ENCODE measurements at regions of chr12 and their contacts with region 1.

Region 1: GRCh38 chr12:4107436-4107878 is 166.1 kb upstream of the CCND2 start:
- DNase-seq: peak; percentile 79
- ATAC-seq: peak; percentile 92
- H3K4me3 Mint-ChIP-seq: peak overlapping the region; percentile 15
- H3K27ac Mint-ChIP-seq: peak overlapping the region; percentile 73
- H3K4me1 Mint-ChIP-seq: peaks cover 36% of the 10 kb centered on the region
- H3K27me3 Mint-ChIP-seq: peaks cover 11% of the 10 kb centered on the region

Region 2: GRCh38 chr12:3998968-3999826 is 108.3 kb before region 1 on chr12:
- CTCF ChIA-PET with region 1: interaction called, 3 read pairs
- POLR2A ChIA-PET with region 1: no interaction called
- intact Hi-C with region 1: loop called in 1 of 2 experiments (anchors 5 kb)
- DNase-seq: no peak
- ATAC-seq: no peak
- H3K4me3 Mint-ChIP-seq: no peak overlapping the region
- H3K27ac Mint-ChIP-seq: no peak overlapping the region
- H3K4me1 Mint-ChIP-seq: peaks cover 16% of the 10 kb centered on the region
- H3K27me3 Mint-ChIP-seq: no peaks in the 10 kb centered on the region

Region 3: DNA sequence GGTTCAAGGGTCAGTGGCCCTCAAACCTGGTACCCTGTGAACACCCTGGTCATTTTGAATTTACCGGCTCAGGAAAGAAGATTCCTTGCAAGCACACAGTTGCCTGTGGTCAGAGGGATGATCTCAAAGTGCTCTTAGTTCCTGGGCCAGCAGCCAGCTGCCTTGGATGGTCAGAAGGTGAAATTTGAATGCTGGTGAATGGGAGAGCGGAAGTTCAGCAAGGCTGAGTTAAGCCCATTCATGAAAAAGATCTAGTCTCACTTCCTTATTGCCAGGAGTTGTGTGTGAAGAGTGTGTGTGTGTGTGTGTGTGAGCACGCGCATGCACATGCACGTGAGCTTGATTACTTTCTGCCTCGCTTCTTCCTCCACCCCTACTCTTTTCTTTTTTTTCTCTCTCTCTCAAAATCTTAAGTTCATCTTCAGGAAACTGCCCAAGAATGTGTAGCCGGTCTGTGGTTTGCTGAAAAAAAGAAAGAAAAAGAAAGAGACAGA is 10.6 kb after region 1 on chr12:
- CTCF ChIA-PET with region 1: interaction called, 18 read pairs
- POLR2A ChIA-PET with region 1: interaction called, 5 read pairs
- intact Hi-C with region 1: no loop called
- DNase-seq: no peak
- ATAC-seq: no peak
- H3K4me3 Mint-ChIP-seq: peak overlapping the region; percentile 38
- H3K27ac Mint-ChIP-seq: peak overlapping the region; percentile 86
- H3K4me1 Mint-ChIP-seq: peaks cover 63% of the 10 kb centered on the region
- H3K27me3 Mint-ChIP-seq: peaks cover 3% of the 10 kb centered on the region

Region 4: DNA sequence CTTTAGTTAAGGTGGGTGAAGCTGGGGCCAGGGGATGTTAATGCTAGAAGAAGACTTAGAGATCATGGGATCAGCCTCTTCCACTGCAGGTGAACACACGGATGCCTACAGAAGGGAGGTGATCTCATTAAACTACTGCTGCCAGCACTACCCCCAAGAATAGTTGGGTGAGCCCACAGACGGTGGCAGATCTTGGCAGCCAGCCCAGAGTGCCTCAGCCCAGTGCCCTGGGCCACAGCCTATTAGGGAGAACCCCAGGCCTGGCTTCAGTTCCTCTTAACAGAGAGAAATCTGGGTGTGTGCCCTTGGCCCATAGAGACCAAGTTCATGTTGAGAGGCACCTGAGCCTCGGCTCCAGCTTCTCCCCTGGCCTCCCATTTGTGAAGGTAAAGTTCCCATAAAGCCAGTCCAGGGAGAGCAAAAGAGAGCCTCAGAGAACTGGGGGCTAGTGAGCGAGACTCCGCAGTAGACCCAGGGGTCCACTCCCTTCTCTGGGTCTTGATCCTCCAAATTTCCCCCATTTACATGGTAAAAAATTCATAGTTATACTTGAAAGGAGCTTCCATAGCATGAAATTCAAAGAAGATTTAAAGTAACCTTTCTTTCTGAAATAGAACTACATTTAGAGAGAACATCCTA is 41.1 kb after region 1 on chr12:
- CTCF ChIA-PET with region 1: interaction called, 17 read pairs
- POLR2A ChIA-PET with region 1: interaction called, 3 read pairs
- intact Hi-C with region 1: loop called in 1 of 2 experiments (anchors 1 kb)
- DNase-seq: peak; percentile 75
- ATAC-seq: no peak
- H3K4me3 Mint-ChIP-seq: no peak overlapping the region
- H3K27ac Mint-ChIP-seq: peak overlapping the region; percentile 94
- H3K4me1 Mint-ChIP-seq: peaks cover 87% of the 10 kb centered on the region
- H3K27me3 Mint-ChIP-seq: no peaks in the 10 kb centered on the region

Region 5: DNA sequence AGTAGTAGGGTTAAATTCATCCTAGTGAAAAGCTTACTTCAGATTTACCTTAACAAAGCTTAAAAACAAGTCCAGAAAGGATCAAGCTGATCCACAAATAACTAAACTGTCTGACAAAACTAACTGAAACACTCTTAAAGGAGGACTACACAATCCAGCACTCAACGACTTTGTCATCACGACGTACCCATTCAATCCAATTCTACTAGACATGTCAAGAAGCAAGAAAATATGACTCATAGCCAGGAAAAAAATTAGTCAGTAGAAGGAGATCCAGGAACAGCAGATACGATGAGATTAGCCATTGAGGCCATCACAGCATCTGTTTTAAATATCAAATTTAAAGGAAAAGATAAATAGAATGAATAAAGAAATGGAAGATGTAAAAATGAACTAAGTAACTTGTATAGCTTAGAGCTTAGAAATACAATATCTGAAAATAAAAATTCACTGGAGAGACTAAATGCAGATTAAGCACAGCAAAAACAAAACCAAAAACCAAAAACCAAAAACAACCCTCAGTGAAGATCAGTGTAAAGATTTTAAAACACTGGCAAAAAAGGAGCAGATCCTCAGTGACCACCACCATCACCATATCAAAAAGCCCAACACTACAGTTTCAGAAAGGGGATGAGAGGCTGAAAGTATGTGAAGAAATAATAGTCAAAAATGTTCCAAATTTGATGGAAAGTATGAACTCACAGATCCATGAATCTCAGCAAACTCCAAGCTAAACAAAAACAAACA is 71.1 kb after region 1 on chr12:
- CTCF ChIA-PET with region 1: interaction called, 6 read pairs
- POLR2A ChIA-PET with region 1: no interaction called
- intact Hi-C with region 1: loop called in 1 of 2 experiments (anchors 1 kb)
- DNase-seq: peak; percentile 52
- ATAC-seq: peak; percentile 98
- H3K4me3 Mint-ChIP-seq: peak overlapping the region; percentile 4
- H3K27ac Mint-ChIP-seq: peak overlapping the region; percentile 66
- H3K4me1 Mint-ChIP-seq: peaks cover 21% of the 10 kb centered on the region
- H3K27me3 Mint-ChIP-seq: no peaks in the 10 kb centered on the region

Region 6: GRCh38 chr12:4269279-4269991 is 162.0 kb after region 1 on chr12:
- CTCF ChIA-PET with region 1: interaction called, 14 read pairs
- POLR2A ChIA-PET with region 1: interaction called, 5 read pairs
- intact Hi-C with region 1: loop called (anchors 1 kb)
- DNase-seq: peak; percentile 97
- ATAC-seq: peak; percentile 14
- H3K4me3 Mint-ChIP-seq: peak overlapping the region; percentile 95
- H3K27ac Mint-ChIP-seq: peak overlapping the region; percentile 100
- H3K4me1 Mint-ChIP-seq: peaks cover 23% of the 10 kb centered on the region
- H3K27me3 Mint-ChIP-seq: no peaks in the 10 kb centered on the region